ENCODE measurements at regions of chr9 and their contacts with region 1.

Region 1: DNA sequence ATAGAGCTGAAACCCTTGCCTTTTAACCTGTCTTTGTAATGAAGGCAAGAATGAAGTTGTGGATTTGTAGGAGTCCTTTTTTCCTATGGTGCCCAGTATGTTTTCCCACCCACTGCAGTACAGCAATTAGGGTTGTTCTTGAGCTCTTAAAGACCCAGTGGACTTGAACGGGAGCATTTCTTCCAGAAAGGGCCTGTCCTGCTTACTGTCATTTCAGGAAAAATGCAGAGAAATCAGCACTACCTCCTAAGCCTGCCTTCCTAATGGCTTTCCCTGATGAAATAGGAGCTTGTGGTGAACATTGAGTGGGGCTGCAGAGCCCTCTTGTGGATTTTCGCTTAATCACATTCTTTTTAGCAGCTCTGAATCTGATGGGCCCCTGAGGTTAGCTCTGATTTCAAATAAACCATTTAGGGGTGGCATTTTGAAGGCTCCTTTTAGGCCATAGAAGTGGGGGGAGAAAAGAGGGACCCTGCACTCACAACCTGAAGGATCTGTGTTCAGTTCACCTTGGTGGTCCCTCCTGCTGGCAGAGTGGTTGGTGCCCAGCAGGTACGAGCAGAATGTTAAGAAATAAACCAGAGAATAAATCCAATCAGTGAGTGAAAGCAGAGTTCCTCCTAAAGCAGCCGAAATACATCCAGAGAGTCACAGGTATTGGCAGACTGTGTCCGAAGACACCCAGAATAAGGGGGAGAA is 188.0 kb upstream of the KLF9 start:
- DNase-seq: no peak
- ATAC-seq: peak; percentile 75
- H3K4me3 Mint-ChIP-seq: no peak overlapping the region
- H3K27ac Mint-ChIP-seq: no peak overlapping the region
- H3K4me1 Mint-ChIP-seq: peaks cover 10% of the 10 kb centered on the region
- H3K27me3 Mint-ChIP-seq: peaks cover 3% of the 10 kb centered on the region
- CTCF ChIP-seq: peak; percentile 51

Region 2: DNA sequence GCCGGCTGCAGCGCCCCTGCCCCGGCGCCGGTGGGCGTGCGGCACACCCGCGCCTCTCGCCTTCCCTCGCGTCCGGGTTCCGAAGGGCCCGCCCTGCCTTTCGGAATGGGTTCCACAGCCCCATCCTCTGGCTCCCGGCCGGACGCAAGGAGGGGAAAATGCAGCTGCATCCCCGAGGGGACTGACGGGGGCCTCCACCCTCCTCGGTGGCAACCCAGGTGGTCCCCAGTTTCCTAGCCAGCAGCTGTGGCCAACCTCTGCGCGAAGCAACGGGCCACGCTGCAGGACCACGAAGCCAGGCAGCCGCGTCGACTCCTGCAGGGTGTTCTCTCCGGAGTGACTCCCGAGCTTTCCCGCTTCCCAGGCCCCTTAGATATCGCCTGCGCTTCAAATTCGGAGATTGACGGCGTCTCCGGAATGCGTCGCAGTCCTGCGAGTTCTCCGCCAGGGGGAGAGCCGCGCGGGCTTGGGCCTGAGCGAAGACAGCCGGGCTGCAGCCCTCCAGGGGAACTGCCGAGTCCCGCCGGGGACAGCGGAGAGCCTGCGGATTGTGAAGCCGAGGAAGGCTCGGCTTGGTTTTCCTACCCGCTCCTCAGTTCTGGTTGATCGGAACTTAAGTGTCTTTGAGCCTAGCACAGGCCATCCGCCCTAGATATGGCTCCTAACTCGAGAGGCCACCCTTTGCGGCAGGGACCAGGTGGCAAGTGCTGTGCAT is 929.7 kb before region 1 on chr9:
- CTCF ChIA-PET with region 1: interaction called, 4 read pairs
- POLR2A ChIA-PET with region 1: no interaction called
- intact Hi-C with region 1: loop called (anchors 2 kb)
- DNase-seq: peak; percentile 48
- ATAC-seq: peak; percentile 93
- H3K4me3 Mint-ChIP-seq: peak overlapping the region; percentile 81
- H3K27ac Mint-ChIP-seq: no peak overlapping the region
- H3K4me1 Mint-ChIP-seq: peaks cover 18% of the 10 kb centered on the region
- H3K27me3 Mint-ChIP-seq: peaks cover 27% of the 10 kb centered on the region
- CTCF ChIP-seq: no peak

Region 3: GRCh38 chr9:70111042-70111602 is 491.3 kb before region 1 on chr9:
- CTCF ChIA-PET with region 1: interaction called, 11 read pairs
- POLR2A ChIA-PET with region 1: no interaction called
- intact Hi-C with region 1: loop called (anchors 2 kb)
- DNase-seq: peak; percentile 35
- ATAC-seq: peak; percentile 47
- H3K4me3 Mint-ChIP-seq: no peak overlapping the region
- H3K27ac Mint-ChIP-seq: no peak overlapping the region
- H3K4me1 Mint-ChIP-seq: peaks cover 8% of the 10 kb centered on the region
- H3K27me3 Mint-ChIP-seq: peaks cover 15% of the 10 kb centered on the region
- CTCF ChIP-seq: peak; percentile 63

Region 4: DNA sequence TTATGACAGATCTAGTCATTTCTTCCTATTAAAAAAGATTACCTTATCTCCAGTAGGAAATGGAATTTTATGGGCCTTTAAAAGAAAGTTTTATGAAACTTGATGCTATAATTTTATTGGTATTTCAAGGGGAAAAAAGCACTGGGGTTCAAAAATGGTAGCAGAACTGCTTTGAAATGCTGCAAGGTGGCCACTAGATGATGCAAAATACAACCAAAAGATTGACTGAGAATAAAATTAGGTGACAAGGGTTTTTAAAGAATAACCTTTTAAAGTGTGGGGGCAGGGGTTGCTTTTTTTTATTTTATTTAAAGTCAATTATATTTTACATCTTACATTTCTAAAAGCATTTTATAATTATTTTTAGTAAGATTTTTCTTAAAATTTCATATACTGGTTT is 249.7 kb before region 1 on chr9:
- CTCF ChIA-PET with region 1: interaction called, 20 read pairs
- POLR2A ChIA-PET with region 1: no interaction called
- intact Hi-C with region 1: no loop called
- DNase-seq: no peak
- ATAC-seq: no peak
- H3K4me3 Mint-ChIP-seq: no peak overlapping the region
- H3K27ac Mint-ChIP-seq: no peak overlapping the region
- H3K4me1 Mint-ChIP-seq: no peaks in the 10 kb centered on the region
- H3K27me3 Mint-ChIP-seq: no peaks in the 10 kb centered on the region
- CTCF ChIP-seq: no peak

Region 5: GRCh38 chr9:70438341-70438928 is 164.0 kb before region 1 on chr9:
- CTCF ChIA-PET with region 1: no interaction called
- POLR2A ChIA-PET with region 1: no interaction called
- intact Hi-C with region 1: no loop called
- DNase-seq: no peak
- ATAC-seq: no peak
- H3K4me3 Mint-ChIP-seq: no peak overlapping the region
- H3K27ac Mint-ChIP-seq: no peak overlapping the region
- H3K4me1 Mint-ChIP-seq: no peaks in the 10 kb centered on the region
- H3K27me3 Mint-ChIP-seq: peaks cover 14% of the 10 kb centered on the region
- CTCF ChIP-seq: no peak

Region 6: DNA sequence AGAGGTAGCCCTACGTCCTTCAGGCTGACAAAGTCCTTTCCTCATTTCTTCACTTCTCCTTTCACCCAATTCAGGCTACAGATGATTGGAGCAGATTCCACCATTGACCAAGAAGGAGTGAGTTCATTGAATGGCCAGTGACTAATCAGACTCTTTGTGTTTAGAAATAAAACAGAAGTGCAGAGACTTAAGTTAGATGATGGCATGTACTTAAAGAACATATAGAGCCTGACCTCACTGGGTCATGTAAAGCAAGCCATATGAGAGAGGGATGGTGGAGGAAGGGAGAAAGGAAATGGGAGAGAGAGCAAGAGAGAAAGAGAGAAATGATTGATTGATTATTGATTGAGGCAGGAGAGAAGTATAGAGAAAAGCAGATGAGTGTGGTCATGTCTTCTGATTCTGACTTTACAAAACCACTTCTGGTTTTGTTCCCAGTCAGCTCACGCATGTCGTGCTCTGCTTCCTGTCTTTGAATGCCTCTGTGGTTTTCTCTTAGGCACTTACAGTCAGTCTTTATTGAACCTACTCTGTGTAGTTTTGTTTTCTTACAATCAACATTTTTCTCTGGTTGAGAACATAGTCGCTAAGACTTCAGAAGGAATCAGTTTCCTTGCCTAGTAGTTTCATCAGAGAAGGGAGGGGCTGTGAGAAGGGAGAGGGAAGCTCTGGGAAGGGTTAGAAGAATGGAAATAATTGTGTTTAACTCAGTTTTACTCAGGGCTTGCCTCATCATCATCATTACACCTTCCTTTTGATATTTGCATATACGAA is 38.9 kb before region 1 on chr9:
- CTCF ChIA-PET with region 1: interaction called, 15 read pairs
- POLR2A ChIA-PET with region 1: no interaction called
- intact Hi-C with region 1: loop called (anchors 2 kb)
- DNase-seq: peak; percentile 20
- ATAC-seq: peak; percentile 93
- H3K4me3 Mint-ChIP-seq: peak overlapping the region; percentile 72
- H3K27ac Mint-ChIP-seq: peak overlapping the region; percentile 95
- H3K4me1 Mint-ChIP-seq: peaks cover 27% of the 10 kb centered on the region
- H3K27me3 Mint-ChIP-seq: no peaks in the 10 kb centered on the region
- CTCF ChIP-seq: no peak

Measured in activated B cell treated with CpG ODN at 0.5 μM for 24 hours (primary cell).